ENCODE measurements at regions of chr1 and their contacts with region 1.

Region 1: DNA sequence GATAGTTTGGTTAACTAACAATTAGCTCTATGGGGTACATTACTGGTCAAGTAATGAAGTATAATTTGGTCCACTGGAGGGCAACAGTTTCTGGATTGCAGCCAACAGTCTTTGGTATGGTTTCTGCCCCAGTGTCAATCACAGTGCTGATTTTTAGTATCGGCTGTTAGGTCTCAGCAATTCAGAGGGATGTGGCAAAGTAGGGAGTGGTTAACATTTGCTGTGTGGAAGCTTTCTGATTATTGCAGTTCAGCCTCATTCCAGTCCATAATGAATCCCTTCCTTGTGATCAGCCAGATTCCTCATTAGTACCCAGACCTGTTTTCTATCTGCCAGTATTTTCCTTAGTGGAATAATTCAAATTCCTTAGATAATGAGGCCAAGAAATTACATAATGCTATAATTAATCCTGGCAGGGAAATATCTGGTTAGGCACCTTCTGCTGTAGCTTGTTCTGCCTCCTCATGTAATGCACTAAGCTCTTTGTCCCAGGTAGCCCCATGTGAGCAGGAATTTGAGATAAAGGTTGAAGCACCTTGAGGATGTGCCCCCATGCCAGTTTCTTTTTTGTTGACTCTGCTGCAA is 14.0 kb downstream of the F3 start:
- DNase-seq: no peak
- H3K4me3 ChIP-seq: no peak overlapping the region
- H3K27ac ChIP-seq: no peak overlapping the region
- H3K4me1 ChIP-seq: peaks cover 0 to 7% (median 3%) of the 10 kb centered on the region in 4 experiments; a peak in 3 of 7 replicates
- H3K27me3 ChIP-seq: no peaks in the 10 kb centered on the region
- CTCF ChIP-seq: peak in 1 of 3 experiments; percentile 16; a peak in 2 of 4 replicates
- EP300 ChIP-seq: no peak
- POLR2A ChIP-seq: no peak
- RAD21 ChIP-seq: peak; percentile 29 to 41; a peak in 3 of 4 replicates

Region 2: GRCh38 chr1:94514095-94514727 is 13.3 kb before region 1 on chr1:
- CTCF ChIA-PET with region 1: interaction called, 55 read pairs
- POLR2A ChIA-PET with region 1: no interaction called
- DNase-seq: peak in 1 of 2 experiments; percentile 49
- H3K4me3 ChIP-seq: no peak overlapping the region
- H3K27ac ChIP-seq: no peak overlapping the region
- H3K4me1 ChIP-seq: no peaks in the 10 kb centered on the region
- H3K27me3 ChIP-seq: no peaks in the 10 kb centered on the region
- CTCF ChIP-seq: peak; percentile 19 to 71 (median 66)
- EP300 ChIP-seq: no peak
- POLR2A ChIP-seq: no peak
- RAD21 ChIP-seq: peak; percentile 78 to 81

Region 3: DNA sequence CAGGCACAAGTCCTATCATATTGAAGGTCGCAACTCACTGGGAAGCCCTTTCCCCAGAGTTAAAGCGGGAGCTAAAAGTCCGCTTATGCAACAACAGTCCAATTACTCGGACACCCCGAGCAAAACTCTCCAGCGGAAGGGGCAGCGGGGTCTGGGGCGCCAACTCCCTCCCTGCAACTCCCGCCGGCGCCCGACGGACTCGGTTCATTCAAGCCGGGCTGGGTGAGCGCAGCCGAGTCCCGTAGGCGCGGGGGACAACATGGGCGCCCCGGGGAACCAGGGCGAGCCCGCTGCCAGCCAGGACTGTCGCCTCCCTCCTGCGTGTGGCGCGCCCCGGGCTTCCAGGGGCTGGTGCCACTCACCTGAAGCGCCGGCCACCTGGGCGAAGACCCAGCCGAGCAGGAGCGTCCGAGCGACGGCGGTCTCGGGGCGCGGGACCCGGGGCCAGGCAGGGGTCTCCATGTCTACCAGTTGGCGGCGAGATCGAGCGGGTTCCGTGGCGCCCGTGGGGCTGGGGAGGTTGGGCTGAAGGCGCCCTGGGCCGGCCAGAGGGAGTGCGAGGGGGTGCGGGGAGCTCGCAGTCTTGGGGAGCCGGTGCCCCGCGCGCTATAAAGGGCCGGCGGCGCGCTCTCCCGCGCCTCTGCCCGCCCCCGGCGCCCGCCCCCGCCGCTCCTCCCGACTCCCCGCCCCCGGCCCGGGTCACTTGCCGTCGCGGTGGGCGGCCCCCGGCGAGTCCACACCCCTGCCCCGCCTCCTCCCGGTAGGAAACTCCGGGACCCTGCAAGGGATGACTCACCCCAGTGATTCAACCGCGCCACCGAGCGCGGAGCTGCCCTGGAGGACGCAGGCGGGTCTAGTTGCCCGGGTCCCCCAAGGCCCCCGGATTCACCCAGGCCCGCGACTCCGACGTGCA is 13.9 kb after region 1 on chr1 and contains the start of gene F3:
- CTCF ChIA-PET with region 1: interaction called, 34 read pairs
- POLR2A ChIA-PET with region 1: interaction called, 24 read pairs
- DNase-seq: peak; percentile 50 to 88
- H3K4me3 ChIP-seq: peak within 1 kb of the TSS; percentile 62 to 82 (median 76)
- H3K27ac ChIP-seq: no peak within 1 kb of the TSS
- H3K4me1 ChIP-seq: peaks cover 2 to 6% (median 3%) of the 10 kb centered on the region in 4 experiments; a peak in 6 of 7 replicates
- H3K27me3 ChIP-seq: peaks cover 2 to 12% (median 7%) of the 10 kb centered on the region in 4 experiments; a peak in 6 of 7 replicates
- CTCF ChIP-seq: peak in 1 of 3 experiments; percentile 25; a peak in 1 of 4 replicates
- EP300 ChIP-seq: no peak
- POLR2A ChIP-seq: peak in 1 of 2 experiments; percentile 67; a peak in 2 of 3 replicates
- RAD21 ChIP-seq: no peak
- total RNA-seq, gene F3: 6.1 and 8.6 TPM in 2 replicates

Measured in H1 (cell line).